BJ (cell line): ENCODE measurements at regions of chr12 and their contacts with region 1.

Region 1: DNA sequence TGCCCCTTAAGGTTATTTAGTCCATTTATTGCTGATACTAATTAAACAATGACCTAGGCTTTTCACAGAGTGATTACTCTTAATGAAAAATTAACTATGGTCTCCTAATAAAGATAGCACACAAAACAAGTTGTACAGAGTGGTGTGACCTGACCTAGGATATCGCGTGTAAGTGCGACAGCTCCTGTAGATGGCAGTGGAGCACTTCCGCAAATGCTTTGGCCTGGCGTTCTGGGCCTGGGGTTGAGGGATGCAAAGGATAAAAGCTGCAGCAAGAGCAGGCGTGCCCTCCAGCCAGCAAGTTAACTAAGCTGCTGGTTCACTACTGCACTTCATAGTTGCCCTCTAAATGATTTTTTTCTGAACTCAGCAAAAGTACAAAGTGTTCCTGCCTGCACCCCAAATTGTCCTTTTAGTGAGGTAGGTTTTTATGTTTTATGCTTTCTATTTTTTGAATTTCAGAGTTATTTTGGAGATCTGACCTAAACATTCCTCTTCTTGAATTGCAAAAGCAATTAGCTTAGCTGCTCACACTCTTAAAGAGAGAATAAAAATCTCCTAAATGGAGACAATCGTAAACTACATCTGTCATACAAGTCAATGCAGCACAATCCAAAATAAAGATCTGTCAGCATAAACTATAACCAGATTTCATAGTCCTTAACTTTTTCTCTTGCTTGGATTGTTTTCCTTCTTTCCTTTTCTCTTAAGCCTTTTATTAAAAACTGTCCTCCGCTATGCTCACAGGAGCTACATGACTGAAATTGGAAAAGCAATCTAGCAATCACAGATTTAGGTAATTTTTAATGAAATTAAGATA is 379.6 kb downstream of the LRIG3 start:
- DNase-seq: no peak
- H3K4me3 ChIP-seq: no peak overlapping the region
- H3K27me3 ChIP-seq: no peaks in the 10 kb centered on the region
- CTCF ChIP-seq: peak; percentile 88

Region 2: DNA sequence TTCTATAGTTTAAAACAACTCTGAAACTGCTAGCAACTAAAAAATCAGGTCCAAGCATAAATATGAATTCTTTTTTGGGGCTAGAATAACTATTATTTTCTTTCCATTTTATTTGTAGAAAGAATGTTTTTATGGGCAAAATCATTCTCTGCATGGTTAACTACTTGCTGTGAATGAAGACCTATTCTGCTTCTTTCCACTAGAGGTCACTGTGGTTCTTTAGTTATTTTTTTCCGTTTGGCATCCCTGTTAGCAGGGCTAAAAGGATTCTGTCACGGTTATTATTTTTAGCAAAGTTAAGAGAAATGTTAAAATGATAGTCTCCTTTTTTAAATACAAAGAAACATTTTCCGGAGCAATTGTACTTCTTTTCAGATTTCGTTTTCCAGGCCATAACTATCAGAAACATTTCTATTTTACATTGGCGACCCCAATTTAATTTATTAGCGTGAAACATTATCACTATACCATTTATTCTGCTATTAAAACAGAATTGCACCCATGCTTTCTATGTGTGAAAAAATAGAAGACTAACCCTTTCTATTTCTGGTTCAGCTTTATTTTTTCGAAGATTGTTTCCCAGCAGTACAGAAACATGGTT is 194.6 kb before region 1 on chr12:
- CTCF ChIA-PET with region 1: interaction called, 18 read pairs
- POLR2A ChIA-PET with region 1: no interaction called
- DNase-seq: no peak
- H3K4me3 ChIP-seq: no peak overlapping the region
- H3K27me3 ChIP-seq: no peaks in the 10 kb centered on the region
- CTCF ChIP-seq: peak; percentile 68

Region 3: DNA sequence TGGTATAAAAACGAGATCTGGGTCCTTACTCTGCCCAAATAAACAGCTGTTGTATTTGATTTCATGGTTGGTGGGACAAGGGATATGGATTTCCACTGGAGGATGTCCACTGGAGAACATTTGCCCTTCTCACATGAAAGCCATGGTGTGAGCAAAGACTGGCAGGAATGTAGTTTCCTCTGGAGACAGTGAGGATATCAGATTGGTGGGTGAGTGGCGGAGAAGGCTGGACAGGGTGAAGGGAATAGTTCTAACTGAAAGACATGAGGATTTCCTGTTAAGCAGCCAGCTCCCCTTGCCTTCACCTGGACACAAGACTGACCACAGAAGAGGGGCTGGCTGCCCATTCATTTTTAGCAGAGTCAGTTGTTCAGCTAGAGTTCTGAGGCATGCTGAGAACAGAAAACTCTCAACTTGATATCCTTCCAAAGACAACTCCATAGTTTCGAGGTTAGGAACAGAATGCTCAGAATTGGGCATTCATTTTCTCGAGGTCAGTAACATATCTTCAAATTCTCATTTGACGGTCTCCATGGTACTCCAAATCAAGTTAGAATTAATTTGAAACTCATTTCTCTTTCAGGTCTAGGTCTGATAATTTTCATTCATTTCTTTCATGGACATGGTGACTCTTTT is 13.9 kb after region 1 on chr12:
- CTCF ChIA-PET with region 1: interaction called, 22 read pairs
- POLR2A ChIA-PET with region 1: no interaction called
- DNase-seq: no peak
- H3K4me3 ChIP-seq: no peak overlapping the region
- H3K27me3 ChIP-seq: no peaks in the 10 kb centered on the region
- CTCF ChIP-seq: no peak

Region 4: GRCh38 chr12:58915634-58916033 is 374.9 kb after region 1 on chr12:
- CTCF ChIA-PET with region 1: interaction called, 13 read pairs
- POLR2A ChIA-PET with region 1: no interaction called
- DNase-seq: peak; percentile 52
- H3K4me3 ChIP-seq: peak overlapping the region; percentile 15
- H3K27me3 ChIP-seq: no peaks in the 10 kb centered on the region
- CTCF ChIP-seq: no peak

Region 5: GRCh38 chr12:59087077-59087673 is 546.5 kb after region 1 on chr12:
- CTCF ChIA-PET with region 1: interaction called, 46 read pairs
- POLR2A ChIA-PET with region 1: no interaction called
- DNase-seq: no peak
- H3K4me3 ChIP-seq: no peak overlapping the region
- H3K27me3 ChIP-seq: no peaks in the 10 kb centered on the region
- CTCF ChIP-seq: peak; percentile 71